ENCODE measurements at regions of chr3 and their contacts with region 1.

Region 1: DNA sequence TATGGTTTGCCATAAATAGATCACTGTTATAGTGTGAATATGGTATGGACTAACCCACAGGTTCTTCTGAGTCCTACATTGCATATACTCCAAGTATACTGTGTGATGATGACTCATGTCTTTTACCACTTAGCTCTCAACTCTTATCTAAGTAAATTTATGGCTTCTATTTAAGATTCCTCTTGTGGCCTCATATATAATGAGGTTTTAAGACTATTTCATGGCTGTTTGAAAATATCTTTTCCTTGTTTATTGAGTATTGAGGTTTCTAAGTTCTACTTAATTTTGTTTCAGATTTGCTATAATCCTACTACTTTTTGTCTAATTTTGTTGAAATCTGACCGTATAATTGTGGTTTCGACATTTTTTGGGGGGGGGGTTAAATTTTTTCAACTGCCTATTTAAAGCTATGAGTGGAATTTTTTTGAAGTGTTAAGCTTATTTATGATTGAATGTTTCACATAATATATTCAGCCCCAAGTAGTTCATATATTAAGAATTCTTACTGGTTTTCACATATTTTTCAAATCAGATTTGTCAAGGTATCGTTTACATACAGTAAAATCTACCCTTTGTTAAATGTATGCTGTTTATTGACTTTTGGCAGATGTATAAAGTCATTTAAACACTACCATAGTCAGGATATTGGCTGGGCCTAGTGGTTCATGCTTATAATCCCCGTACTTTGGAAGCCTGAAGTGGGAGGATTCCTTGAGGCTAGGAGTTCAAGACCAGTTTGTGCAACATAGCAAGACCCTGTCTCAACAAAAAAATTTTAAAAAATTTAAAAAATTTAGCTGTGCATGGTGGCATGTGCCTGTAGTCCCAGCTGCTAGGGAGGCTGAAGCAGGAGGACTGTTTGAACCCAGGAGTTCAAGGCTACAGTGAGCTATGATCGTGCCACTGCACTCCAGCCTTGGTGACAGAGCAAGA is 11.7 kb downstream of the SLC25A36 start:
- DNase-seq: no peak
- H3K4me3 ChIP-seq: no peak overlapping the region
- H3K27ac ChIP-seq: no peak overlapping the region
- H3K4me1 ChIP-seq: peaks cover 2 to 13% (median 3%) of the 10 kb centered on the region in 4 experiments; a peak in 5 of 7 replicates
- H3K27me3 ChIP-seq: no peaks in the 10 kb centered on the region
- CTCF ChIP-seq: no peak
- EP300 ChIP-seq: no peak
- POLR2A ChIP-seq: no peak
- RAD21 ChIP-seq: no peak

Region 2: GRCh38 chr3:140941434-140942220 is 11.7 kb before region 1 on chr3 and contains the start of gene SLC25A36:
- CTCF ChIA-PET with region 1: interaction called, 3 read pairs
- POLR2A ChIA-PET with region 1: interaction called, 13 read pairs
- DNase-seq: peak; percentile 93 to 97
- H3K4me3 ChIP-seq: peak within 1 kb of the TSS; percentile 76 to 95 (median 90)
- H3K27ac ChIP-seq: peak within 1 kb of the TSS; percentile 97
- H3K4me1 ChIP-seq: no peaks in the 10 kb centered on the region; a peak in 2 of 7 replicates
- H3K27me3 ChIP-seq: no peaks in the 10 kb centered on the region
- CTCF ChIP-seq: no peak
- EP300 ChIP-seq: peak in 1 of 2 experiments; percentile 31; a peak in 1 of 3 replicates
- POLR2A ChIP-seq: peak; percentile 77 to 90
- RAD21 ChIP-seq: no peak
- total RNA-seq, gene SLC25A36: 71.8 and 74.6 TPM in 2 replicates

Measured in H1 (cell line).